Activated CD4-positive, alpha-beta memory T cell treated with anti-CD3 and anti-CD28 coated beads for 36 hours (primary cell): ENCODE measurements at regions of chr14 and their contacts with region 1.

Region 1: GRCh38 chr14:50060871-50061663 is 55.3 kb downstream of the VCPKMT start:
- DNase-seq: peak; percentile 71
- H3K4me3 Mint-ChIP-seq: peak overlapping the region; percentile 96
- H3K27ac Mint-ChIP-seq: peak overlapping the region; percentile 99
- H3K4me1 Mint-ChIP-seq: peaks cover 73% of the 10 kb centered on the region
- H3K27me3 Mint-ChIP-seq: no peaks in the 10 kb centered on the region

Region 2: GRCh38 chr14:49620182-49621113 is 440.6 kb before region 1 on chr14 and contains the starts of genes MGAT2 and RPL36AL:
- CTCF ChIA-PET with region 1: no interaction called
- POLR2A ChIA-PET with region 1: interaction called, 6 read pairs
- intact Hi-C with region 1: loop called (anchors 5 kb)
- DNase-seq: peak; percentile 98
- H3K4me3 Mint-ChIP-seq: peak within 1 kb of the TSS; percentile 96
- H3K27ac Mint-ChIP-seq: peak within 1 kb of the TSS; percentile 96
- H3K4me1 Mint-ChIP-seq: peaks cover 39% of the 10 kb centered on the region
- H3K27me3 Mint-ChIP-seq: no peaks in the 10 kb centered on the region
- total RNA-seq, gene MGAT2: 40.4 to 43.7 TPM
- total RNA-seq, gene RPL36AL: 314 to 320 TPM

Region 3: DNA sequence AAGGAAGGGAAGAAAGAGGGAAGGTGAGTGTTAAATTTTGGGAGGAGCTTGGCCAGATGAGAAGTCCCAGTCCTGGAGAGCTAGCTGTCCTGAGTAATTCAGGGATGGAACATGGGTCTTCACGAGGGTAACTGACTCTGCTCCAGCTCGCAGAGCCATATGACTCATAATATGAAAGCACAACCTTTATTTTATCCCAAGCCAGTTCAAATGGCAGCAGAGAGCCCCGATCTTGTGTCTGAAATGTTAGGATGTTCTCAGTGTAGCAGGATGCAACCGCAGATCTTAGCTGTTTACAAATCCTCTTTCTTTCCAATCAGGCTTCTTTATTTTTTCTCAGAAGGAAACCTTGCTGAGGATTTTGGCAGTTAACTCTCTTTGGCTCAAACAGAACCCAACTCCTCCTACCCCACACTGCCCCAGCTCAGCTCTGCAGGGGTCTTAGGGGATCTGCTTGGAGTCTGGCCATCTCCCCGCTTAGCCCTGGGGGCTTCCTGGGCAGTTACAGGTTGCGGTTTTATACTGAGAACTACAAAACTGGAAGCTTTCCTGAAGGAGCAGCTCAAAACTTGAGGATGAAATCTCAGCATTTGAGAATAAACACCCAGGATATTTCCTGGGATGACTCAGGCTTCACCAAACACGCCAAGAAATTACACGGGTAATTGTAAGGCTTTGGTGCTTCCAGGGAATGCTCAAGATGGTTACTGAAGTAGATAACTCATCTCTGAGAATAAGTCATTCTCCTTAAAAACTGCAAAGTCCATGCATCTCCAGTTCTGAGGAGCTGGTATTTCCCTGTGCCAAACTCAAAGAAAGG is 37.2 kb before region 1 on chr14:
- CTCF ChIA-PET with region 1: interaction called, 6 read pairs
- POLR2A ChIA-PET with region 1: interaction called, 3 read pairs
- intact Hi-C with region 1: loop called (anchors 1 kb)
- DNase-seq: no peak
- H3K4me3 Mint-ChIP-seq: no peak overlapping the region
- H3K27ac Mint-ChIP-seq: peak overlapping the region; percentile 31
- H3K4me1 Mint-ChIP-seq: peaks cover 43% of the 10 kb centered on the region
- H3K27me3 Mint-ChIP-seq: no peaks in the 10 kb centered on the region

Region 4: DNA sequence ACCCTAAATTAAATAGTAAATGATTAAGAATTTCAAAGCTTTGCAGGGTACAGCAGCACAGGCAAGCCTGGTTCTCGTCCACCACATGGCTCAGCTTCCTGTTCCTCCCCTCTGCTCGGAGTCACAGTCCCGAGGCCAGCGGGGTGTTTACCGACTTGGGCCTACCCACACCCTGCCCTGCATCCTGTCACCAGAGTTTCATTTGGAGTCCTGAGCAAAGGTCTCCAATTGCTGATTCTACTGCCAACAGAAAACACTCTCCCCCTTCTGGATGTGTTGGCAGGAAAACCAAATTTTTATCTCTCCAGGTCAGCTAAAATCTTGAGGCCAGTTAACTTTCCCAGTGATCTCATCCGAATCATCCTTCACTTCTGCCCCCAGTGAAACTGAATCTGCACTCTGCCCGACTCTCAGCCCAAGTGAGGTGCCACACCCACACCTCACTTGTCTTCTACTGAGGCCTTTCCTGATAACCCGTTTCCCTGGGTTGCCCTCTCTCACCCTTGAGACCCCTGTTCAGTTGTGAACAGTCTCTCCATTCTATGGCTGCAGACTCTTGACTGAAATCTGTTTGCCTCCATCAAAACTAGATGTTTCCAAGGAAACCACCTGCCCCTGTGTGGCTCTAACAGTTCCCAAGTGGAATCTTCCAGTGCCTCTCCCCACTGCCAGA is 15.9 kb before region 1 on chr14:
- CTCF ChIA-PET with region 1: interaction called, 64 read pairs
- POLR2A ChIA-PET with region 1: interaction called, 137 read pairs
- intact Hi-C with region 1: no loop called
- DNase-seq: peak; percentile 90
- H3K4me3 Mint-ChIP-seq: peak overlapping the region; percentile 0
- H3K27ac Mint-ChIP-seq: peak overlapping the region; percentile 87
- H3K4me1 Mint-ChIP-seq: peaks cover 59% of the 10 kb centered on the region
- H3K27me3 Mint-ChIP-seq: no peaks in the 10 kb centered on the region

Region 5: DNA sequence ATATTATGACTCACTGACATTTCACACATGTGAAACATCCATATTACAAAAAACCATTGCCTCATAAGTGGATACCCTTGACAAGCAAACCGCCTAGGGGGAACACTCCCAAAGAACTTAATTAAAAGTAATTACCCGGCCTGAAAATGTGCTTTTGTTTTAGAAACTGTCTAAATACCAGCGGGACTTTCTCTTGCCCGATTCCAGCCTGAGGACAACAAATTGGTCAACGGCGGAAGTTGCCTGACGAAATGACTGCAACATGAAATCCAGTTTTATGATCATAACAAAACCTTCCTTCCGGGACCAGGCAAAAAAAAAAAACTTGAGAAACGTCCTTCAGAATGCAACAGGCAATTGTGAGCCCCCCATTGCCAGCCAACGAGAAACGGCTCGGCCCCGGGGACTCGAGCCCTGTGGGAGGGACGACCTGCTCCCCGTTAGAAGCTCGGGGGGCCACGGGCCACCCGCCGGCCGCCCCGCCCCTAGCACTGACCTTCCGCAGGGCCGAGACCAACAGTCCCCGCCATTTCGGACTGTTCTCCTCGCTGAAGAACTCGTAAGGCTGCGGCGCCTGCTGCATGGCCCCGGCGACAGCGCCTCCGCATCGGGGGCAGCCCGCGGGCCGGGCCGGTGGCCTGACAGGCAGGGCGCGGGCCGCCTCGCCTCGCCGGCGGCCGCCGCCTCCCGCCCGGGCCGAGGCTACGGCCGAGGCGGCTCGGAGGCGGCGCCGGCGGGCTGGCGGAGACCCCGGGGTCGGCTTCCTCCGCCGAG is 169.8 kb after region 1 on chr14:
- CTCF ChIA-PET with region 1: no interaction called
- POLR2A ChIA-PET with region 1: no interaction called
- intact Hi-C with region 1: no loop called
- DNase-seq: peak; percentile 67
- H3K4me3 Mint-ChIP-seq: peak overlapping the region; percentile 78
- H3K27ac Mint-ChIP-seq: peak overlapping the region; percentile 85
- H3K4me1 Mint-ChIP-seq: peaks cover 47% of the 10 kb centered on the region
- H3K27me3 Mint-ChIP-seq: no peaks in the 10 kb centered on the region